ENCODE measurements at regions of chrX and their contacts with region 1.

Region 1: DNA sequence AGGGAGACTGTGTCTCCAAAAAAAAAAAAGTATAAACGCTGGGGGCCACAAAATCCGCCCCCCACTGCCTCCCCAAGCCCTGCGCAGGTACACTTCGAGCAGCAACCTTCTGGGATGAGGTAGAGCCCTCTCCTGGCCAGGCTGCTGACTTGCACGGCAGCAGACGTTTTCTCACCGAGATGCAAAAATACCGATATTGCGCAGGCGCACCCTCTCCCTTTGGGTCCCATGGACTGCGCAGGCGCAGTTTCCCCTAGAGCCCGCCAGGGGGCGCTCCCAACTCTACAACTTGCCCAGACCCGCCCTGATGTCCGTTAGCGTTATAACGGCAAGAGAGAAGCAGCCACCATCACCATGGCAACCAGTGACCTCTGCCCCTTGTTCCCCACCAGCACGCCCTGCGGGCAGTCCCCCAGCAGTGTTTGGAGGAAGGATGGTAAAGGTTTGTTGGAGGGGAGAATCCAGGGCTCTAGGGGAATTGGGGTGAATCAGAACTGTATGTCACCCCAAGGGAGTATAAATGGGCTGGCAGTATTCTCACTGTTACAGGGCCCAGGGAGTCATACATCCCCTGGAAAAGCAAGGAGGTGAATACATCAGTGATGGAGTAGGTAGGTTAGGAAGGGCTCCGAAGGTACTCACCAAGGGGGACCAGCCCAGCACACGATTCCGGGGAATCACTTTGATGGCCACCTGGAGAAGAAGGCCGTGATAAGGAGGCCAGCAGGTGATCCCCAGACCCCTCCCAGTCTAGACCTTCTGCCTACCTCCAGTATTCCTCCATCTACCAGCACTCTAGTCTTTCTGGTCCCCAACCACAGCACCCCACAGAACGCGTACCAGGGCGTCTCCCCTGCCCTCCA is 1.5 kb downstream of the PIM2 start:
- DNase-seq: peak; percentile 71
- ATAC-seq: peak; percentile 46
- H3K4me3 Mint-ChIP-seq: peak overlapping the region; percentile 97
- H3K27ac Mint-ChIP-seq: peak overlapping the region; percentile 95
- H3K4me1 Mint-ChIP-seq: peaks cover 54% of the 10 kb centered on the region
- H3K27me3 Mint-ChIP-seq: no peaks in the 10 kb centered on the region
- CTCF ChIP-seq: peak; percentile 22

Region 2: DNA sequence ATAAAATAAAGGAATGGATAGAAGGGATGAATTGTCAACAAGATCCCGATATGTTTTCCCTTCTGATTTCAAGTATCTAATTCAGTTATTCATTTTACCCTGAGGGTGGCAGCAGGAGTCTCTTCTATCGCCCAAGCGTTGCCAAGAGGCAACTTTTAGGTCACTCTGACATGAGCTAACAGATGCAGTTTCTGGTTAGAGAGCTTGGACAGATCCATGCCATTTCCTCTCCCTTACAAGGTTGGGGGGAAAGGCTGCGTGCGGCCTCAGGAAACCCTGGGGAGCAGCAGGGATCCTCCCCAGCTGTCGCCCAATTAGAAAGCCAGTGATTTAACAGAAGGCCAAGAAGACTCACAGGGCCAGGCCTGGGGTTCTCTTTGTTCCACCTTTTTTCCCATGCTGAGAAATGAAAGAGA is 269.0 kb before region 1 on chrX:
- CTCF ChIA-PET with region 1: no interaction called
- POLR2A ChIA-PET with region 1: interaction called, 3 read pairs
- intact Hi-C with region 1: loop called (anchors 1 kb)
- DNase-seq: no peak
- ATAC-seq: peak; percentile 65
- H3K4me3 Mint-ChIP-seq: no peak overlapping the region
- H3K27ac Mint-ChIP-seq: no peak overlapping the region
- H3K4me1 Mint-ChIP-seq: peaks cover 2% of the 10 kb centered on the region
- H3K27me3 Mint-ChIP-seq: no peaks in the 10 kb centered on the region
- CTCF ChIP-seq: no peak

Region 3: GRCh38 chrX:48891402-48892288 is 25.7 kb before region 1 on chrX:
- CTCF ChIA-PET with region 1: interaction called, 4 read pairs
- POLR2A ChIA-PET with region 1: interaction called, 55 read pairs
- intact Hi-C with region 1: loop called (anchors 2 kb)
- DNase-seq: peak; percentile 67
- ATAC-seq: peak; percentile 88
- H3K4me3 Mint-ChIP-seq: peak overlapping the region; percentile 82
- H3K27ac Mint-ChIP-seq: peak overlapping the region; percentile 65
- H3K4me1 Mint-ChIP-seq: peaks cover 23% of the 10 kb centered on the region
- H3K27me3 Mint-ChIP-seq: no peaks in the 10 kb centered on the region
- CTCF ChIP-seq: no peak

Region 4: GRCh38 chrX:48927736-48928382 is 10.5 kb after region 1 on chrX:
- CTCF ChIA-PET with region 1: no interaction called
- POLR2A ChIA-PET with region 1: interaction called, 718 read pairs
- intact Hi-C with region 1: loop called (anchors 1 kb)
- DNase-seq: no peak
- ATAC-seq: peak; percentile 45
- H3K4me3 Mint-ChIP-seq: peak overlapping the region; percentile 65
- H3K27ac Mint-ChIP-seq: peak overlapping the region; percentile 63
- H3K4me1 Mint-ChIP-seq: peaks cover 43% of the 10 kb centered on the region
- H3K27me3 Mint-ChIP-seq: no peaks in the 10 kb centered on the region
- CTCF ChIP-seq: no peak

Region 5: DNA sequence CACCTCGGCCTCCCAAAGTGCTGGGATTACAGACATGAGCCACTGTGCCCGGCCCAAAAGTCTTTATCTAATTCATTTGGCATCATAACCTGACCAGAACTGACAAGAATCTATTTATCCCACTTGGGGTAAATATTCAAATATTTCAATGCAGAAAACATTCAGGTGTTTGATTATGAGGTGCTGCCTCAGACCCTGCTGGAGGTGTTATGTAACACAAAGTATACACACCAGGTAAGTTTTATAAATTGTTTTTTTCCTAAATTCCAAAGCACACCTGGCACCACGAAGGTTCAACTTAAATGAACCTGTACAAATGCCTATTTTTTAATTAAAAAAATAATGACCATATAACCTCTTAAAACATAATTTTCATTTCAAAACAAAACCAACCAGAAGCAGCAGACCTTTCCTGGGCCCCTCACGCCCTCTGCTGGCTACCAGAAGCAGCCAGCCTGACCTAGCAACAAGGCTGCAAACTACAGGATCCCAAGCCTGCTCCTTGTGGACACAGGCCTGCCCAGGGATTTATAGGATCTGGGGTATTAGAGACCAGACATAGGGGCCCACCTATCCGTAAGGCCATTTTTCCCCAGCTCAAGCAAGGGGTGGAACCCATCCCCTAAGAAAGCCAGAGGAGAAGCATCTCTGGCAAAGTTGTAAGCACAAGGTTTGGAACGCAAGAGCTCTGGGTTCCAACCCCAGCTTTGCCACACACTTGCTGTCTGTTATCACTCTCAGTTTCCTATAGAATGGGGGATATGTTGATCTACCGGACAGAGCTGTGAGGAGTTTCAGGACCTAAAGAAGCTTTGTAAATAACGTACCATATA is 28.4 kb after region 1 on chrX:
- CTCF ChIA-PET with region 1: interaction called, 6 read pairs
- POLR2A ChIA-PET with region 1: interaction called, 718 read pairs
- intact Hi-C with region 1: loop called (anchors 1 kb)
- DNase-seq: no peak
- ATAC-seq: peak; percentile 56
- H3K4me3 Mint-ChIP-seq: no peak overlapping the region
- H3K27ac Mint-ChIP-seq: peak overlapping the region; percentile 41
- H3K4me1 Mint-ChIP-seq: peaks cover 44% of the 10 kb centered on the region
- H3K27me3 Mint-ChIP-seq: no peaks in the 10 kb centered on the region
- CTCF ChIP-seq: no peak

Region 6: DNA sequence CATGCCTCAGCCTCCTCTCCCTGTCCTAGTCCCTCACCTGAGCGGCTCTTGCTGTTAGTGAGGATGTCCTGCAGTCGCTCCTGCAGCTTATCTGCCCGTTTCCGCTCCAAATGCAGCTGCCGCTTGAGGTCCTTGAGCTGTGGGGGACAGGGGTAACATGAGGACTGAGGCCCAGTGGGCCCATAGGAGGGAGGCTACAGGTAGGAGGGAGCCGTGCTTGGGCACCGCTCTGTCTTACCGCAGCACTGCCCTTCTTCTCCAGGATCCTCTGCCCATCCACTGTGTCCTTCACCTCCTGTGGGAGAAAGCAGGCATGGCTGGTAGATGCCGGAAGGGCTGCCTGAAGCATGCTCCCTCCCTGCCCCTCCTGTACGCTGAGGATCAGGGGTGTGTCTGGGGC is 63.8 kb after region 1 on chrX:
- CTCF ChIA-PET with region 1: no interaction called
- POLR2A ChIA-PET with region 1: no interaction called
- intact Hi-C with region 1: no loop called
- DNase-seq: no peak
- ATAC-seq: no peak
- H3K4me3 Mint-ChIP-seq: no peak overlapping the region
- H3K27ac Mint-ChIP-seq: no peak overlapping the region
- H3K4me1 Mint-ChIP-seq: no peaks in the 10 kb centered on the region
- H3K27me3 Mint-ChIP-seq: no peaks in the 10 kb centered on the region
- CTCF ChIP-seq: no peak

Region 7: GRCh38 chrX:49043220-49043986 is 126.0 kb after region 1 on chrX and contains the start of gene TFE3:
- CTCF ChIA-PET with region 1: no interaction called
- POLR2A ChIA-PET with region 1: interaction called, 11 read pairs
- intact Hi-C with region 1: loop called (anchors 1 kb)
- DNase-seq: peak; percentile 82
- ATAC-seq: peak; percentile 86
- H3K4me3 Mint-ChIP-seq: peak within 1 kb of the TSS; percentile 89
- H3K27ac Mint-ChIP-seq: peak within 1 kb of the TSS; percentile 85
- H3K4me1 Mint-ChIP-seq: peaks cover 33% of the 10 kb centered on the region
- H3K27me3 Mint-ChIP-seq: no peaks in the 10 kb centered on the region
- CTCF ChIP-seq: no peak
- total RNA-seq, gene TFE3: 31.1 and 33.3 TPM in 2 replicates

Region 8: DNA sequence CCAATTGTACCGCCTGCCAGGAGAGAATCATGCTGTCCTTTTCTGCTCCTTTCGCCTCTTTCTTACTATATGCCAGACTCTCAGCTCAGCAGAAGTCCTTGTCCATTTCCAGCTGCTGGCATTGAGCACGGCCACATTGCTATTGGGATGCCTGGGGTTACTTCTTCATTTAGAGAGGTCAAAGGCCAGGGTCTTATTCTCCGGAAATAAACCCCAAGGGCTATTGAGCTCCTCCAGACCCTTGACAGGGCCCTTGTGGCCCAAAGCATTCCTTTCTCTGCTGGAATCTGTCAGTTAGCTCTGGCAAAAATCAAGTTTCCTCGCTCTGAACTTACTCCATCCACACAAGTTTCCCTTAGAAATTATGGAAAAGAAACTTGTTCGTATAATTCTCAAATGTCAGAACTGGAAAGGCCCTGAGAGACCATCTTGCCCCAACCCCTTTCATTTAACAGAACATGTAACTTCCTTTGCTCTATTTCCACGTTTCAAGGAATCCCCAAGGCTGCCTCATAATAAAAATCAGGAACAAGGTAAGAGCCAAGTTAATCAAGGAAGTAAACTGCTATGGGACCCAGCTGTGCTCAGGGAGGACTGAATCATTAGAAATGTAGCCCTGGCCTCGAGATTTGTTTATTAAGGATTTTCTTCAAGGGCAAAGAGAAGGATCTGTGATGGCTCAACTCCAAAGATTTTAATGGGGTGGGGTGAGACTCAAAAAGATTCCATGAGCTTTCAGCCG is 1271.7 kb after region 1 on chrX:
- CTCF ChIA-PET with region 1: no interaction called
- POLR2A ChIA-PET with region 1: no interaction called
- intact Hi-C with region 1: no loop called
- DNase-seq: no peak
- ATAC-seq: no peak
- H3K4me3 Mint-ChIP-seq: no peak overlapping the region
- H3K27ac Mint-ChIP-seq: no peak overlapping the region
- H3K4me1 Mint-ChIP-seq: no peaks in the 10 kb centered on the region
- H3K27me3 Mint-ChIP-seq: peaks cover 4% of the 10 kb centered on the region
- CTCF ChIP-seq: no peak

Measured in activated B cell treated with CpG ODN at 0.5 μM for 24 hours (primary cell).